Activated CD4-positive, alpha-beta T cell treated with anti-CD3 and anti-CD28 coated beads for 36 hours (primary cell): ENCODE measurements at regions of chr5 and their contacts with region 1.

Region 1: GRCh38 chr5:109409844-109410388 is at the start of gene PJA2:
- DNase-seq: peak; percentile 98
- ATAC-seq: peak; percentile 89
- H3K4me3 Mint-ChIP-seq: peak within 1 kb of the TSS; percentile 99
- H3K27ac Mint-ChIP-seq: peak within 1 kb of the TSS; percentile 99
- H3K4me1 Mint-ChIP-seq: peaks cover 41% of the 10 kb centered on the region
- H3K27me3 Mint-ChIP-seq: no peaks in the 10 kb centered on the region
- total RNA-seq, gene PJA2: 51.8 to 56.4 TPM

Region 2: DNA sequence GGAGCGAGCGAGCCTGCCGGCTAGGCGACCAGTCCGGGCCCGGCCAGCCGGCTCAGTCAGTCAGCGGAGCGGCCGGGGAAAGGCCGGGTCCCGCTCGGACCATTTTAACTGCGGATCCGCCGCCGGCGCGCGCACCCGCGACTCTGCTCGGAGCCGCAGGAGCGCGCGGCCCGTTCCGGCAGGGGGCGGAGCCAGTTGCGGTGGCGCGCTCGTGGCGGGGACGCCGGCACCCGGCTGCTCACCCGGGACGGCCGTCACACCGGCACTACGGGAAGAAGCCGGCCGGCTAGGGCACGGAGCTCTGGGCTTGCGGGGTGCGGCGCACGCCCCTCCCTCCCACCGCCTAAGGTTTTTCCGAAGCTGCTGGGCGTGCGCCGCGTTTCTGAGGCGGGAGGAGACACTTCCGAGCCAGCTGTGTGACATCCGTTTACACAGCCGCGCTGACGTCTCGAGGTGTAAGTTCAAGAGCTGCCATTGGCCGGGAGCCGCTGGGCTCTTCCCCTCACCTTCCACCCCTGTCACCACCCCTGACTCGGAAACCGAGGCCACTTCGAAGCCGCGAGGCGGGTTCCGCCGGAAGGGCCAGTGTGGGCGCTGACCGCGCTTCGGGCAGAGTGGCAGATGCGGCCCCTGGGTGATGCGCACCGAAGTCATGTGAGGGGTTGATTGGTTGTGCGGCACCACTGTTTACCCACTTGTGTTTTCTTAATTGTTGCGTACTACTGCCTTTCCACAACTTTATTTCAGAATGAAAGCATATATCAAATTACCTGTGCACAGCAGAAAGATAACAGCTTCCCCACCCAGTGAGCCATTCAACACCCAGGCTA is 1027.7 kb before region 1 on chr5 and contains the start of gene FBXL17:
- CTCF ChIA-PET with region 1: no interaction called
- POLR2A ChIA-PET with region 1: interaction called, 3 read pairs
- intact Hi-C with region 1: loop called (anchors 1 to 2 kb)
- DNase-seq: peak; percentile 95
- ATAC-seq: peak; percentile 84
- H3K4me3 Mint-ChIP-seq: peak within 1 kb of the TSS; percentile 77
- H3K27ac Mint-ChIP-seq: peak within 1 kb of the TSS; percentile 97
- H3K4me1 Mint-ChIP-seq: peaks cover 33% of the 10 kb centered on the region
- H3K27me3 Mint-ChIP-seq: no peaks in the 10 kb centered on the region
- total RNA-seq, gene FBXL17: 3.1 to 6.6 TPM

Region 3: GRCh38 chr5:108748401-108749127 is 661.4 kb before region 1 on chr5:
- CTCF ChIA-PET with region 1: no interaction called
- POLR2A ChIA-PET with region 1: interaction called, 5 read pairs
- intact Hi-C with region 1: loop called (anchors 1 kb)
- DNase-seq: peak; percentile 98
- ATAC-seq: peak; percentile 98
- H3K4me3 Mint-ChIP-seq: peak overlapping the region; percentile 75
- H3K27ac Mint-ChIP-seq: peak overlapping the region; percentile 89
- H3K4me1 Mint-ChIP-seq: peaks cover 18% of the 10 kb centered on the region
- H3K27me3 Mint-ChIP-seq: no peaks in the 10 kb centered on the region

Region 4: GRCh38 chr5:109247986-109248385 is 161.9 kb before region 1 on chr5:
- CTCF ChIA-PET with region 1: no interaction called
- POLR2A ChIA-PET with region 1: no interaction called
- intact Hi-C with region 1: loop called (anchors 5 to 10 kb)
- DNase-seq: no peak
- ATAC-seq: no peak
- H3K4me3 Mint-ChIP-seq: no peak overlapping the region
- H3K27ac Mint-ChIP-seq: no peak overlapping the region
- H3K4me1 Mint-ChIP-seq: no peaks in the 10 kb centered on the region
- H3K27me3 Mint-ChIP-seq: peaks cover 2% of the 10 kb centered on the region

Region 5: DNA sequence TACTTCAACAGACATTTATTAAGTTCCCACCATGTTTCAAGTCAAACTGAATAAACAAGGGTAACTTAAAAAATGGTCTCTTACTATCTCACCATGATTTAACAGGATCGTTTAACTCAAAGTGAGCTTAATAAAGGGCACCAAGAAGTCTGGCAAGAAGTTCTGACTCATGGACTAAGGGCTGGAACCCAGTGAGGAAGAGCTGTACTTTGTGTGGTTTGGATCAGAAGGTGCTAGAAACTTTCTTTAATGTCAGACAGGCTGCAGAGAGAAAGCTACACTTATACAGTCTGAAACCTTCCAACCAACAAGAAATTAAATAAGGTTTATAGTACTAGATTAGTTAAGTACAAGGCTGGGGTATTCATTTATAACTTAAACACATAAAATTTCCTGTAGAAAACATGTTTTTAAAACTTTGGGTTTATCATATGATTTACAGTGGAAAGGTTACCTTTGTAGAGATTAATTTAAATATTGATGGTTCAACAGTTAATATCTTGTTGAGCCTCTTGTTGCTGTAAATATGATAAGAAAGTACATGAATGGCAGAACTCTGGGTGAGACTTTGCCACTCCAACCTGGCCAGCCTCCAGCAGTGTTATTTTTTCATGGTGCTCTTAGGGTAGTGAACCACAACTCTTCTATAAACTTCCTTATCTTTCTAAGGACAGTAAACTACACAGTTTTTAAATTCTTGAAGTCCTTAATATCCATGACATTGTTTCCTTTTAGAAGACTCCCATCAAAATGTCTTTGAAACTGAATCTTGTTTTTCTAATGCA is 442.6 kb after region 1 on chr5:
- CTCF ChIA-PET with region 1: no interaction called
- POLR2A ChIA-PET with region 1: no interaction called
- intact Hi-C with region 1: loop called in 1 of 2 experiments (anchors 10 kb)
- DNase-seq: no peak
- ATAC-seq: peak; percentile 88
- H3K4me3 Mint-ChIP-seq: no peak overlapping the region
- H3K27ac Mint-ChIP-seq: peak overlapping the region; percentile 53
- H3K4me1 Mint-ChIP-seq: peaks cover 73% of the 10 kb centered on the region
- H3K27me3 Mint-ChIP-seq: no peaks in the 10 kb centered on the region

Region 6: GRCh38 chr5:110738812-110739651 is 1329.1 kb after region 1 on chr5 and contains the start of gene SLC25A46:
- CTCF ChIA-PET with region 1: no interaction called
- POLR2A ChIA-PET with region 1: no interaction called
- intact Hi-C with region 1: loop called in 1 of 2 experiments (anchors 2 kb)
- DNase-seq: peak; percentile 92
- ATAC-seq: peak; percentile 89
- H3K4me3 Mint-ChIP-seq: peak within 1 kb of the TSS; percentile 87
- H3K27ac Mint-ChIP-seq: peak within 1 kb of the TSS; percentile 91
- H3K4me1 Mint-ChIP-seq: peaks cover 17% of the 10 kb centered on the region
- H3K27me3 Mint-ChIP-seq: peaks cover 4% of the 10 kb centered on the region
- total RNA-seq, gene SLC25A46: 32.3 to 35.3 TPM

Region 7: GRCh38 chr5:111229871-111230810 is 1820.2 kb after region 1 on chr5:
- CTCF ChIA-PET with region 1: no interaction called
- POLR2A ChIA-PET with region 1: no interaction called
- intact Hi-C with region 1: loop called in 1 of 2 experiments (anchors 10 kb)
- DNase-seq: peak; percentile 36
- ATAC-seq: peak; percentile 49
- H3K4me3 Mint-ChIP-seq: peak overlapping the region; percentile 69
- H3K27ac Mint-ChIP-seq: peak overlapping the region; percentile 96
- H3K4me1 Mint-ChIP-seq: peaks cover 71% of the 10 kb centered on the region
- H3K27me3 Mint-ChIP-seq: no peaks in the 10 kb centered on the region